ENCODE measurements at regions of chr2 and their contacts with region 1.

Region 1: DNA sequence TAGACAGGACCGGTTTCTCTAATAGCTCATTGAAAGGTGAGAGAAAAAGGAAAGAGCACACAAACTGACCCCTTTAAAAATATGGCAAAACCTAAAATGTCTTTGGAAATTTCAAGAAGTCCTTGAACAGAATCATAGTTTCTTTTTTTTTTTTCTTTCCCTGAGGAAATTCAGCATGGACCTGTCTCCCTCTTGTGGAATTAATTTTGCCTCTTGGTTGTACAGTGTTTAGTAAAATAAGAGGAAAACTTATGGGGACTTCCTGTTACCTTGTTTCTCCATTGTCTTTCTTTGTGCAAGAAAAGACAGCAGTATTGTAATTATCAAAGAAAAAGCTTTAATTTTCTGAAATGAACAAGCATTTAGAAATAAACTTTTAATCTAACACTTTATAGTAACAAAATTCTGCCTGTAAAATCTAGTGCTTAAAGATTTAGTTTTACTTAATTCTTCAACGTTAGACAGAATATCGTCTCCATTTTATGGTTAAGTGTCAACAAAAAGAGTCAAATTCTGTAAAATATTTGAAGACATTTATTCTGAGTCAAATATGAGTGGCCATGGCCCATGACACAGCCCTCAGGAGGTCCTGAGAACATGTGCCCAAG is 176.3 kb upstream of the NABP1 start:
- DNase-seq: no peak
- H3K4me3 ChIP-seq: no peak overlapping the region
- H3K27ac ChIP-seq: no peak overlapping the region
- H3K27me3 ChIP-seq: no peaks in the 10 kb centered on the region
- CTCF ChIP-seq: peak; percentile 79

Region 2: GRCh38 chr2:191150600-191151330 is 350.9 kb before region 1 on chr2 and contains the start of gene STAT4:
- CTCF ChIA-PET with region 1: interaction called, 15 read pairs
- POLR2A ChIA-PET with region 1: no interaction called
- DNase-seq: no peak
- H3K4me3 ChIP-seq: peak within 1 kb of the TSS; percentile 58
- H3K27ac ChIP-seq: no peak within 1 kb of the TSS
- H3K27me3 ChIP-seq: no peaks in the 10 kb centered on the region
- CTCF ChIP-seq: no peak
- polyA plus RNA-seq, gene STAT4: 0.88 and 1.3 TPM in 2 replicates

Region 3: GRCh38 chr2:191171708-191172355 is 329.8 kb before region 1 on chr2:
- CTCF ChIA-PET with region 1: interaction called, 126 read pairs
- POLR2A ChIA-PET with region 1: no interaction called
- DNase-seq: peak; percentile 81
- H3K4me3 ChIP-seq: no peak overlapping the region
- H3K27ac ChIP-seq: peak overlapping the region; percentile 81
- H3K27me3 ChIP-seq: no peaks in the 10 kb centered on the region
- CTCF ChIP-seq: no peak

Region 4: DNA sequence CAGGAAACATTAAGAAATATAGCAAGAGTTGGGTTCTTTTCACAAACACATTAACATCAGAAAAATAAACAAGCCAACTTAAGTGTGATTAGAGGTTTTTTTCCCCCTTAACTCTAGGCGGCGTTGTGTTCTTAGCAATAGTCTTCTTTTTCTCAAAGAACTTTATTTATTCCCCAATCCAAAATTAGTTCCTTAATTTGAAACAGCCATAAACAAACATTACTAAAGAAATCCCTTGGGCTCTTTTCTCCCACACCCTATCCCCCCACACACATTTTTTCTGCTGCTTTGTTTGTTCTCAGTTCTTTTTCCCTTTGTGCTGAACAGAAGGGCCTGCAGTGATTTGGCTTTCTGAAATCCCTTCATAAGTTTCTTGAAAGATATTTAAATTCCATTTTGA is 269.7 kb before region 1 on chr2:
- CTCF ChIA-PET with region 1: interaction called, 15 read pairs
- POLR2A ChIA-PET with region 1: no interaction called
- DNase-seq: no peak
- H3K4me3 ChIP-seq: no peak overlapping the region
- H3K27ac ChIP-seq: no peak overlapping the region
- H3K27me3 ChIP-seq: no peaks in the 10 kb centered on the region
- CTCF ChIP-seq: peak; percentile 64

Region 5: DNA sequence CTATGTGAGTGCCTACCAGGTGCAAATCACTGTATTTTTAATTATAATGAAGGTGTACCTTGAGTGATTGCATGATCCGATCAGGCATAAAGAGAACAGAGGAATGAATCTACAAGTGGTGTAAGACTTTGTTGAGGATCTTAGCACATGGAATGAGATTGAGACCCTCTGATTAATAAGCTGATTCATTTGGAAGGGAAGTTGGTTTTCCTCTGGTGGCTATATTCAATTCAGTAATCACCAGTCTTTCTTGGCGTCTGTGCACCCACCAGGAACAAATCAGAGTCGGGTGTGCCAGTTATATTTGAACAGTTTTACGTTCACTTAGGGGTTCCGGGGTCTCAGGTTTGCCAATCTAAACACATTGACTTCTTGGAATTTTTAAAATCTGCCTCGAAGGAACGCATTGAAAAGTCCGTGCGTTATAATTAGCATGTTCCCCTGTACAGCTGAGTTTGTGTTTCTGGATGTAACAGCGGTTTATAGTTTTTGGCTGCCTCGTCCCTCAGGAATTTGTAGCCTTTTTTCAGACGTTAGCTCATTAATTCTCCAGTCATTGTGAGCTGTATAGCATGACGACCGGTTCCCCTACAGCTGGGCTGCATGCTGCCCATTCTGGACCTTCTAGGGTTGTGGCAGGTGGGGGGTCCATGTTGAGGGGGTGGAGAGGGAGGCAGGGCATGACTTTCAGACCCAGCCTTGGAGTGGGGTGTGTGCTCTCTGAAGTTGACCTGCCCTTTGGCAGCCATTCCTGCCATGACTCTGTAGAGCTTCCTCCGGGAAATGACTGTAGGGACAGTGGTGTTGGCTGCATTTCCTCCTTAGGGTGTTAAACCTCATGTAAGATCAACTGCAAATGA is 236.1 kb before region 1 on chr2:
- CTCF ChIA-PET with region 1: interaction called, 13 read pairs
- POLR2A ChIA-PET with region 1: no interaction called
- DNase-seq: no peak
- H3K4me3 ChIP-seq: peak overlapping the region; percentile 20
- H3K27ac ChIP-seq: peak overlapping the region; percentile 73
- H3K27me3 ChIP-seq: no peaks in the 10 kb centered on the region
- CTCF ChIP-seq: no peak

Region 6: DNA sequence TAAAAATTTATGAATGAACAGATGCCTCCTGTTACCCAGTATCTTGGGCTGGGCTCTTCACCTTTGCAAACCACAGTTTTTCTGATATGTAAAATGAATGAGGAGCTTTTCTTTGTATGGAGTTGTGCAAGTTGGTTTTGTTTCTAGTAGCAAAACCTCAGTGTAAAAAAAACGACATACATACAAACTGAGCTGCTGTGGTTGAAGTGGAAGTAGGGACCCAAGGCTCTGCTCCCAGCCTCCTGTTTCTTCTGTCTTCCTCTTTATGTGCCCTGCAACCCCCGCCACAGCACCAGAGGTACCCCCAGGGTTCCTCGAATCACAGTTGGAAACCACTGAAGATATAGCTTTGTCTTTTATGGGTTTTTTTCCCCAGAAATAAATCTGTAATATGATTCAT is 138.4 kb before region 1 on chr2:
- CTCF ChIA-PET with region 1: interaction called, 16 read pairs
- POLR2A ChIA-PET with region 1: interaction called, 3 read pairs
- DNase-seq: no peak
- H3K4me3 ChIP-seq: no peak overlapping the region
- H3K27ac ChIP-seq: peak overlapping the region; percentile 85
- H3K27me3 ChIP-seq: no peaks in the 10 kb centered on the region
- CTCF ChIP-seq: no peak

Region 7: GRCh38 chr2:191515551-191515950 is 13.9 kb after region 1 on chr2:
- CTCF ChIA-PET with region 1: interaction called, 27 read pairs
- POLR2A ChIA-PET with region 1: no interaction called
- DNase-seq: no peak
- H3K4me3 ChIP-seq: no peak overlapping the region
- H3K27ac ChIP-seq: no peak overlapping the region
- H3K27me3 ChIP-seq: no peaks in the 10 kb centered on the region
- CTCF ChIP-seq: no peak

Region 8: DNA sequence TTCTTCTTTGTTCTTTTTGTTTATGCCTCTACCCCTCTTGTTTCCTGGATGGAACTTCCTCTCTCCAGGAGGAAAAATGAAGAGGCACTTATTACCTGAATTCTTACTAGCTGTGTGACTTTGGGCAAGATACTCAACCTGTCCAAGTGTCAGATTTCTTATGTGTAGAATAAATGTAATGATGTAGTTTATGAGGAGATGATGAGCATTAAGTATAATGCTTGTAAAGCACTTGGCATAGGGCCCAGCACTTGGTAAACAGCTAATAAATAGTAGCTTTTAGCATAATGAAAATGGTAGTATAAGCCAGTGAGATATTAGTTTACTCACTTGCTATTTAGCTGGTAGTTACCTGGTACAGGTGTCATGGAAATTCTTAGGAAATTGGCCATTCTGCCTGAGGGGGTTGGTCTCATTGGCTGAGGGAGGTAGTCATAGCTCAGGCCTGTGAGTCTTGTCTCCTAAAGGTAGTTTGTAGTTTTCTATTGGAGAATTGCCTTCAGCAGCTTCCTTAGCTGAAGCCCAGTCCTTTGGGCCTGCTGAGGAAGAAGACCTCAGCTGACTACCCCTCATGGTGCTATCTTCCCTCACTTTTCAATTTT is 42.9 kb after region 1 on chr2:
- CTCF ChIA-PET with region 1: no interaction called
- POLR2A ChIA-PET with region 1: no interaction called
- DNase-seq: no peak
- H3K4me3 ChIP-seq: no peak overlapping the region
- H3K27ac ChIP-seq: no peak overlapping the region
- H3K27me3 ChIP-seq: peaks cover 3% of the 10 kb centered on the region
- CTCF ChIP-seq: no peak

Region 9: GRCh38 chr2:191728750-191729624 is 227.3 kb after region 1 on chr2:
- CTCF ChIA-PET with region 1: no interaction called
- POLR2A ChIA-PET with region 1: no interaction called
- DNase-seq: no peak
- H3K4me3 ChIP-seq: no peak overlapping the region
- H3K27ac ChIP-seq: no peak overlapping the region
- H3K27me3 ChIP-seq: peaks cover 3% of the 10 kb centered on the region
- CTCF ChIP-seq: no peak